Spleen (tissue), 13 donors: ENCODE measurements at regions of chr1 and their contacts with region 1.

Region 1: GRCh38 chr1:110203021-110203661 is 7.0 kb upstream of the KCNC4 start:
- DNase-seq: no peak
- H3K4me3 ChIP-seq: no peak overlapping the region
- H3K27ac ChIP-seq: peak overlapping the region in 3 of 8 donors; percentile 33 to 69 (median 36)
- H3K4me1 ChIP-seq: peaks cover 0 to 23% (median 13%) of the 10 kb centered on the region in 6 donors
- H3K27me3 ChIP-seq: no peaks in the 10 kb centered on the region
- CTCF ChIP-seq: peak; percentile 70 to 94 (median 90)
- POLR2A ChIP-seq: no peak

Region 2: GRCh38 chr1:110312188-110313121 is 109.3 kb after region 1 on chr1:
- intact Hi-C with region 1: loop called (anchors 2 kb)
- DNase-seq: peak; percentile 93
- H3K4me3 ChIP-seq: no peak overlapping the region
- H3K27ac ChIP-seq: no peak overlapping the region
- H3K4me1 ChIP-seq: peaks cover 3 to 28% (median 15%) of the 10 kb centered on the region in 6 donors
- H3K27me3 ChIP-seq: no peaks in the 10 kb centered on the region
- CTCF ChIP-seq: peak; percentile 86 to 99 (median 93)
- POLR2A ChIP-seq: no peak

Region 3: GRCh38 chr1:110477041-110477440 is 273.9 kb after region 1 on chr1:
- intact Hi-C with region 1: no loop called
- DNase-seq: no peak
- H3K4me3 ChIP-seq: no peak overlapping the region
- H3K27ac ChIP-seq: no peak overlapping the region
- H3K4me1 ChIP-seq: peaks cover 0 to 4% (median 0%) of the 10 kb centered on the region in 6 donors
- H3K27me3 ChIP-seq: no peaks in the 10 kb centered on the region
- CTCF ChIP-seq: no peak
- POLR2A ChIP-seq: no peak